CD8-positive, alpha-beta T cell (primary cell): ENCODE measurements at regions of chr15 and their contacts with region 1.

Region 1: GRCh38 chr15:51185213-51186159 is 90.8 kb upstream of the TNFAIP8L3 start:
- DNase-seq: no peak
- ATAC-seq: no peak
- H3K4me3 ChIP-seq: no peak overlapping the region
- H3K4me3 Mint-ChIP-seq: no peak overlapping the region
- H3K27ac ChIP-seq: no peak overlapping the region
- H3K27ac Mint-ChIP-seq: no peak overlapping the region
- H3K4me1 ChIP-seq: no peaks in the 10 kb centered on the region
- H3K4me1 Mint-ChIP-seq: no peaks in the 10 kb centered on the region
- H3K27me3 ChIP-seq: no peaks in the 10 kb centered on the region
- H3K27me3 Mint-ChIP-seq: peaks cover 12% of the 10 kb centered on the region
- CTCF ChIP-seq: no peak

Region 2: GRCh38 chr15:51030649-51031316 is 154.7 kb before region 1 on chr15:
- CTCF ChIA-PET with region 1: no interaction called
- POLR2A ChIA-PET with region 1: no interaction called
- intact Hi-C with region 1: no loop called
- DNase-seq: no peak
- ATAC-seq: no peak
- H3K4me3 ChIP-seq: no peak overlapping the region
- H3K4me3 Mint-ChIP-seq: no peak overlapping the region
- H3K27ac ChIP-seq: no peak overlapping the region
- H3K27ac Mint-ChIP-seq: no peak overlapping the region
- H3K4me1 ChIP-seq: no peaks in the 10 kb centered on the region
- H3K4me1 Mint-ChIP-seq: no peaks in the 10 kb centered on the region
- H3K27me3 ChIP-seq: no peaks in the 10 kb centered on the region
- H3K27me3 Mint-ChIP-seq: no peaks in the 10 kb centered on the region
- CTCF ChIP-seq: no peak

Region 3: GRCh38 chr15:51162865-51163762 is 22.4 kb before region 1 on chr15:
- CTCF ChIA-PET with region 1: interaction called, 10 read pairs
- POLR2A ChIA-PET with region 1: no interaction called
- intact Hi-C with region 1: no loop called
- DNase-seq: peak in 8 of 9 experiments; percentile 20 to 63 (median 52)
- ATAC-seq: no peak
- H3K4me3 ChIP-seq: no peak overlapping the region
- H3K4me3 Mint-ChIP-seq: no peak overlapping the region
- H3K27ac ChIP-seq: no peak overlapping the region
- H3K27ac Mint-ChIP-seq: no peak overlapping the region
- H3K4me1 ChIP-seq: no peaks in the 10 kb centered on the region
- H3K4me1 Mint-ChIP-seq: peaks cover 2% of the 10 kb centered on the region
- H3K27me3 ChIP-seq: no peaks in the 10 kb centered on the region
- H3K27me3 Mint-ChIP-seq: peaks cover 12% of the 10 kb centered on the region
- CTCF ChIP-seq: peak; percentile 86